ENCODE measurements at regions of chr2 and their contacts with region 1.

Region 1: GRCh38 chr2:68742626-68743415 is 8.2 kb downstream of the ARHGAP25 start:
- DNase-seq: no peak
- H3K4me3 ChIP-seq: no peak overlapping the region
- H3K27ac ChIP-seq: no peak overlapping the region
- H3K4me1 ChIP-seq: no peaks in the 10 kb centered on the region
- H3K27me3 ChIP-seq: no peaks in the 10 kb centered on the region
- CTCF ChIP-seq: no peak
- POLR2A ChIP-seq: no peak

Region 2: GRCh38 chr2:68849579-68850030 is 106.8 kb after region 1 on chr2:
- intact Hi-C with region 1: loop called (anchors 10 kb)
- DNase-seq: no peak
- H3K4me3 ChIP-seq: no peak overlapping the region
- H3K27ac ChIP-seq: no peak overlapping the region
- H3K4me1 ChIP-seq: no peaks in the 10 kb centered on the region
- H3K27me3 ChIP-seq: no peaks in the 10 kb centered on the region
- CTCF ChIP-seq: no peak
- POLR2A ChIP-seq: no peak

Region 3: DNA sequence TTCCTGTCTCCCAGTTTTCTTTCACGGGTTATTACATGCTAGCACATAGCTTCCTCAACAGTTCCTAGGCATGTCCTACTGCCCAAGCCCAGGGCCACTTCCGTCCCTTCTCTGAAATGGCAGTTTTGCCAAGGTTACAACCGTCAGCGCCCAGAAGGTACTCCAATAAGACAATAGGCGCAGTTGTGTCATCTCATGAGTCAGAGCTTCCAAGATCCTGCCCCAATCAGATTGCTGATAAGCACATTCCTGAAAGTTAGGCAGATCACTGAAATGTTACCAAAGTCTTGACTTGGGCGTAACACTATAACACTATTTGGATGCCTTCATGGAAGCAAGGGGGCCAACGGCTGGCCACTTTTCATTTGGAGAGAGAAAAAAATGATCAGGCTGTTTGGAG is 175.7 kb after region 1 on chr2:
- intact Hi-C with region 1: loop called (anchors 5 kb)
- DNase-seq: no peak
- H3K4me3 ChIP-seq: no peak overlapping the region
- H3K27ac ChIP-seq: no peak overlapping the region
- H3K4me1 ChIP-seq: no peaks in the 10 kb centered on the region
- H3K27me3 ChIP-seq: no peaks in the 10 kb centered on the region
- CTCF ChIP-seq: no peak
- POLR2A ChIP-seq: no peak

Region 4: GRCh38 chr2:68943581-68944568 is 201.1 kb after region 1 on chr2:
- intact Hi-C with region 1: no loop called
- DNase-seq: peak; percentile 48 to 57
- H3K4me3 ChIP-seq: no peak overlapping the region
- H3K27ac ChIP-seq: no peak overlapping the region
- H3K4me1 ChIP-seq: no peaks in the 10 kb centered on the region
- H3K27me3 ChIP-seq: no peaks in the 10 kb centered on the region
- CTCF ChIP-seq: peak; percentile 75 to 84 (median 80)
- POLR2A ChIP-seq: no peak